Ascending aorta (tissue), 2 donors: ENCODE measurements at regions of chr19 and their contacts with region 1.

Region 1: DNA sequence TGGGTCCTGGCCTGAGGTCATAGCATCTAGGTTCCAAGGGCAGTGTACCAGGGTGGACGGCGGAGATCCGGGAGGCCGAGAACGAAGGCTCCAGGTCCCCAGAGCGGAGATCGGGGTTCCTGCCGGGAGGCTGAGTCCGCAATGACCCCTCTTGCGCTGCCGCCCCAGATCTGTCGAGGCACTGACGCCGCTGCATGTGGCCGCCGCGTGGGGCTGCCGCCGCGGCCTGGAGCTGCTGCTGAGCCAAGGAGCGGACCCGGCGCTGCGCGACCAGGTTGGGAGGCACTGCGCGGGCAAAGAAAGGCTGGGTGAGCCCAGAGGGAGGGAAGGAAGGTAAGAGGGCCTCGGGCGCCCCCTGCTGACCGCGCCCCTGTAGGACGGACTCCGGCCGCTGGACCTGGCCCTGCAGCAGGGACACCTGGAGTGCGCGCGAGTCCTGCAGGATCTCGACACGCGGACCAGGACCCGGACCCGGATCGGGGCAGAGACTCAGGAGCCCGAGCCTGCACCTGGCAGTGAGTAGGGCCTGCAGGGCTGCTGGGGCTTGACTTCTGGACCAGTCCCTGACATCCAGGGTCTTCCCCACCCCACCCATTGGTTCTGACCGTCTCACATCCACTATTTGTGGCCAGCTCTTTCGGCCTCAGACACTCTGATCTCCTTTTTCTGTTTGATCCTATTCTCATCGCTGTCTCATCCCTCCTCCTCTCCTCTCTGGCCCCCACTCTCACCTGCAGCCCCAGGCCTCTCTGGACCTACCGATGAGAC is 971 bp downstream of the ANKLE1 start:
- DNase-seq: peak in 1 of 2 donors; percentile 87
- H3K4me3 ChIP-seq: peak overlapping the region; percentile 27 to 56
- H3K27ac ChIP-seq: no peak overlapping the region
- H3K4me1 ChIP-seq: peaks cover 7 to 11% of the 10 kb centered on the region in 2 donors
- H3K27me3 ChIP-seq: peaks cover 8% of the 10 kb centered on the region
- CTCF ChIP-seq: peak; percentile 92 to 94 (median 94)

Region 2: DNA sequence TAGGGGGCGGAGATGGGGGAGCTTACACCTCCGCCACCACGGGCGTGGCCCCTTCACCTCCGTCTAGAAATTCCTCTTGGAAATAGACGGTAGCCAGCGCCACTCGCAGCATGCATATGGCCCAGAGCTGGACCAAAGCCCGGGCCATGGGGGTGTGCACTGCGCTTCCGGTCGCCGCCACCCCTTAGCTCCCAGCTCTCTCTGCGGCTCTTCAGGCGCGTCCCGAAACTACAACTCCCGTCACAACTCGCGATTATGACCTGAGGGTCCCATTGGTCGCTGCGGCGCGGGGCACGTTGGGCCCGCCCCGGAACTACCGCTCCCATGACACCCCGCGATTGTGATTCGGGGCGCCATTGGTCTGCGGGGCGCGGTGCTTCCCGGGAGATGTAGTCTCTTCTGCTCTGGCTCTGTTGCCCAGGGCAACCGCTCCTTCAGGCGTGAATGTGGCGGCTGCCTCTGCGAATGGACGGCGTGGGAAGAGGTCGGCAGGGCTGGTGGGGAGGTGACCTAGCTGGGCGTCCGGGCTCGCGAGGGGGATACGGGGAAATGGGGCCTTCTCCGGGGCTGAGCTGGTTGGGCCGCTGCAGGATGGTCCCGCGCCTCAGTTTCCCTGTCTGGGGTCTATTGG is 786.6 kb before region 1 on chr19 and contains the starts of genes C19orf44 and CALR3:
- intact Hi-C with region 1: no loop called
- DNase-seq: peak; percentile 97 to 100
- H3K4me3 ChIP-seq: peak within 1 kb of the TSS; percentile 72 to 82
- H3K27ac ChIP-seq: peak within 1 kb of the TSS; percentile 64 to 69
- H3K4me1 ChIP-seq: peaks cover 0 to 7% of the 10 kb centered on the region in 2 donors
- H3K27me3 ChIP-seq: no peaks in the 10 kb centered on the region
- CTCF ChIP-seq: peak in 1 of 3 experiments; percentile 22
- total RNA-seq, gene C19orf44: 5.1 TPM
- total RNA-seq, gene CALR3: not detected

Region 3: GRCh38 chr19:17069218-17069617 is 213.5 kb before region 1 on chr19:
- intact Hi-C with region 1: loop called (anchors 1 kb)
- DNase-seq: no peak
- H3K4me3 ChIP-seq: no peak overlapping the region
- H3K27ac ChIP-seq: no peak overlapping the region
- H3K4me1 ChIP-seq: peaks cover 0 to 4% of the 10 kb centered on the region in 2 donors
- H3K27me3 ChIP-seq: no peaks in the 10 kb centered on the region
- CTCF ChIP-seq: no peak

Region 4: GRCh38 chr19:17205237-17206140 is 77.2 kb before region 1 on chr19:
- intact Hi-C with region 1: loop called (anchors 1 kb)
- DNase-seq: no peak
- H3K4me3 ChIP-seq: no peak overlapping the region
- H3K27ac ChIP-seq: no peak overlapping the region
- H3K4me1 ChIP-seq: no peaks in the 10 kb centered on the region
- H3K27me3 ChIP-seq: no peaks in the 10 kb centered on the region
- CTCF ChIP-seq: peak; percentile 51 to 56 (median 52)

Region 5: DNA sequence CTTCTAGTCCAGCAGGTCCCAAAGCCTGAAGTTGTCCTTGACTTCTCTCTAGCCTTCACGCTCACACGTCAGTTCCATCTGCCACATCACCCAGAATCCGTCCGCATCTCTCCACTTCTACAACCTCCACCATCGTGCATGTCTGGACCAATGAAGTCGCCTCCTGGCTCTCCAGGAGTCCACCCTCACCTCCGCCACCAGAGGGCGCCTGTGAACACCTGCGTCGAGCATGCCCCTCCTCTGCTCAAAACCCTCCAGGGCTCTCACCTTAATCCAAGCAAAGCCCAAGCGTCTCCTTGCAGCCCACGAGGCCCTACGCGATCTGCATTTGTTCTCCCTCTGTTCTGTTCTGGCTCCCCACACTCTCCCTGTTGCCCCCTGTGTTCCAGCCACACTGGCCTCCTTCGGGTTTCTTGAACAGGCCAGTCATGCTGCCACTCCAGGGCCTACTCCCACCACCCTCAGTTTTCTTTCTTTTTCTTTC is 21.8 kb before region 1 on chr19:
- intact Hi-C with region 1: loop called (anchors 2 kb)
- DNase-seq: peak in 1 of 2 donors; percentile 87
- H3K4me3 ChIP-seq: no peak overlapping the region
- H3K27ac ChIP-seq: no peak overlapping the region
- H3K4me1 ChIP-seq: no peaks in the 10 kb centered on the region
- H3K27me3 ChIP-seq: no peaks in the 10 kb centered on the region
- CTCF ChIP-seq: peak; percentile 83 to 93 (median 83)